CD8-positive, alpha-beta T cell (primary cell): ENCODE measurements at regions of chr16 and their contacts with region 1.

Region 1: DNA sequence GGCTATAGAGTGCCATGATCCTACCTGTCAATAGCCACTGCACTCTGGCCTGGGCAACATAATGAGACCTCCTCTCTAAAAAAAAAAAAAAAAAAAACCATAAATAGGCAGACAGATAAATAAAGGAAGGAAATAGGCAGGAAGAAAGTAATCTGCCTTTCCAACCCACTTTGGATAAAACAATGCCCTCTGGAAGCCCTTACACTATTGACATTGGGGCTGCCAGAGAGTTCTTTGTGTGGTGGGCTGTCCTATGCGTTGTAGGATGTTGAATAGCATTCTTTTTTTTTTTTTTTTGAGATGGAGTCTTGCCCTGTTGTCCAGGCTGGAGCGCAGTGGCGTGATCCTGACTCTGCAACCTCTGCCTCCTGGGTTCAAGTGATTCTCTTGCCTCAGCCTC is 7.2 kb upstream of the RFWD3 start:
- DNase-seq: no peak
- ATAC-seq: no peak
- H3K4me3 ChIP-seq: no peak overlapping the region
- H3K4me3 Mint-ChIP-seq: no peak overlapping the region
- H3K27ac ChIP-seq: no peak overlapping the region
- H3K27ac Mint-ChIP-seq: no peak overlapping the region
- H3K4me1 ChIP-seq: no peaks in the 10 kb centered on the region
- H3K4me1 Mint-ChIP-seq: no peaks in the 10 kb centered on the region
- H3K27me3 ChIP-seq: no peaks in the 10 kb centered on the region
- H3K27me3 Mint-ChIP-seq: no peaks in the 10 kb centered on the region
- CTCF ChIP-seq: no peak

Region 2: DNA sequence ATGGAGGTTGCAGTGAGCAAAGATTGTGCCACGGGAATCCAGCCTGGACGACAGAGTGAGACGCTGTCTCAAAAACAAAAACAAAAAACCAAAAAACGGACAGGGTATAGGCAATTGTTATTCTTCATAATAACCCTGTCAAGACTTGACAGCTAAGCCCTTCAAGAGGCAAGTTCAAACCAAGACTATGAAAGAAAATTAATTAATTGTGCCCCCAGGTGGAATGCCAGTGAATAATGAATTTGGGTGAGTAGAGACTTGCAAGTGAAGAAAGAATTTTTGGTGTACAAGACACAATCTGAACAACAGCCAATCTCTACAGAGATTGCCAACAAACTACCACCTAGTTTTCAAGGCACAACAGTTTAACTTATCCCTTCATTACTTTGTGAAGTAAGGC is 13.5 kb before region 1 on chr16:
- CTCF ChIA-PET with region 1: no interaction called
- POLR2A ChIA-PET with region 1: no interaction called
- intact Hi-C with region 1: loop called in 1 of 2 experiments (anchors 1 kb)
- DNase-seq: no peak
- ATAC-seq: no peak
- H3K4me3 ChIP-seq: no peak overlapping the region
- H3K4me3 Mint-ChIP-seq: no peak overlapping the region
- H3K27ac ChIP-seq: no peak overlapping the region
- H3K27ac Mint-ChIP-seq: peak overlapping the region; percentile 27
- H3K4me1 ChIP-seq: peaks cover 48% of the 10 kb centered on the region
- H3K4me1 Mint-ChIP-seq: peaks cover 80% of the 10 kb centered on the region
- H3K27me3 ChIP-seq: no peaks in the 10 kb centered on the region
- H3K27me3 Mint-ChIP-seq: no peaks in the 10 kb centered on the region
- CTCF ChIP-seq: no peak

Region 3: DNA sequence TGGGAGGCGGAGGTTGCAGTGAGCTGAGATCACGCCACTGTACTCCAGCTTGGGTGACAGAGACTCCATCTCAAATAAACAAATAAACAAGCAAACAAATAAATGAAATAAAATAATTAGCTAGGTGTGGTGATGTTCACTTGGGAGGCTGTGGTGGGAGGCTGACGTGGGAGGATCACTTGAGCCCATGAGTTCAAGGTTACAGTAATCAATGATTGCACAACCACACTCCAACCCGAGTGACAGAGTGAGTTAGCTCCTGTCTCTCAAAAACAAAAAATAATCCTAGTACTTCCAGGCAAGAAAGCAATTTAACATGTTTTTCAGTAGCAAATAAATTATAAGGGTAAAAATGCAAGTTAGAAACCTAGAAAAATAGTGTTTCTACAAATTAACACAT is 733.1 kb after region 1 on chr16:
- CTCF ChIA-PET with region 1: no interaction called
- POLR2A ChIA-PET with region 1: no interaction called
- intact Hi-C with region 1: no loop called
- DNase-seq: no peak
- ATAC-seq: no peak
- H3K4me3 ChIP-seq: no peak overlapping the region
- H3K4me3 Mint-ChIP-seq: no peak overlapping the region
- H3K27ac ChIP-seq: no peak overlapping the region
- H3K27ac Mint-ChIP-seq: no peak overlapping the region
- H3K4me1 ChIP-seq: no peaks in the 10 kb centered on the region
- H3K4me1 Mint-ChIP-seq: no peaks in the 10 kb centered on the region
- H3K27me3 ChIP-seq: no peaks in the 10 kb centered on the region
- H3K27me3 Mint-ChIP-seq: no peaks in the 10 kb centered on the region
- CTCF ChIP-seq: no peak